PC-9 (cell line): ENCODE measurements at regions of chr2 and their contacts with region 1.

Region 1: DNA sequence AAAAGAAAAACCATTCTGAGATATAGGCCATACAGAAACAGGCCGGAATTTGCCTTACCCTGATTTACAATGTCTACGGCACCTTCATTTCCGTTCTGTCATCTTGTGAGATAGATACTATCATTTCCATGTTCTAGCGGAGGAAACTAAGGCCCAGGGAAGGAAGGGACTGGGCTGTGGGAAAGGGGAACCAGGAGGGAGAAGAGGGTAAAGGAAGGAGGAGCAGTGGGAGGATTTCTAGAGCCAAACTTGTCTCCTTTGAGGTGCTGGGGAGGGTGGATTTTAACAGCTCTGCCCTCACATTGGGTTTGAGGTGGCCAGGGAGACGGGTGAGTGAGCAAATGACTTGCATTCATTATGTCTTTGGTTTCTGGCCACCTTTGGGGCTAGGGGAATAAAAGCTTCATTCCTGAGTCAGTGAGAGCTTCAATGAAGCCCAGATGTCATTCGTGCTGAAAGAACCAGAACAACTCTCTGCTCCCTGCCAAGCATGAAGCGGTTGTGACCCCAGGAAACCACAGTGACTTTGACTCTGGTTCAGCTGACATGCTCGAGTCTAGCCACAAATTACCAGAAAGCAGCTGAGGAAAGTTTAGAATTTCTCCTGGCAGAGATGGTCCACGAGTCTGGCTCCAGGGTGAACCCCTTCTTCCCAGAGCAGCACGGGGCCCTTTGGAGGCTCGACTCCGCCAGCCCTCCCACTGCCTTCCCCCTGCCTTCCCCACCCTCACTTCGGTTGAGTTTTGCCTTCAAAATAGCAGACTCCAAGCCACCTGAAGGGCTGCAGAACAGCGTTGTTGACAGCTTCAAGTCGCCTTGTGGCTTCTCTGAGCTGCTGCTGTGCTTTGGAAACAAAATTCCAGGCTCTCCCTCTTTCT is 3.8 kb downstream of the ACTG2 start:
- DNase-seq: no peak
- H3K4me3 ChIP-seq: no peak overlapping the region
- H3K27ac ChIP-seq: no peak overlapping the region
- H3K4me1 ChIP-seq: no peaks in the 10 kb centered on the region
- H3K27me3 ChIP-seq: no peaks in the 10 kb centered on the region
- CTCF ChIP-seq: no peak

Region 2: DNA sequence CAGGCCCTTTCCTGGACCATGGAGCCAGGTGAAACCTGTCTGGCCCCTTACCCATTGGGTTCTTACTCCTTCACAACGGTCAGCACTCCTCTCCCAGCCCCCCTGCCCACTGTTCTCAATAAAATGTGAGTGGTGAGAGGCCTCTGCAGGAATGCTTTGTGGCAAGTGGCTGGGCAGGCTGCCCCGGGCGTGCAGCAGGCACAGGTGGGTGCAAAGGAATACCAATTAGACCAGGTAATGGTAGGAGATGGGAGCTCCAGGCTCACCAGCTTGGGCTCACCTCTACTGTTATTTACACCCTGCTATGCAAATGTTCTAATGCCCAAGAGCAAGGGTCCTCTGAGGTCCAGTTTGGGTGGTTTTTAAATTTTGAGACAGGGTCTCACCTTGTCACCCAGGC is 669.5 kb before region 1 on chr2:
- CTCF ChIA-PET with region 1: no interaction called
- POLR2A ChIA-PET with region 1: interaction called, 12 read pairs
- intact Hi-C with region 1: no loop called
- DNase-seq: no peak
- H3K4me3 ChIP-seq: no peak overlapping the region
- H3K27ac ChIP-seq: no peak overlapping the region
- H3K4me1 ChIP-seq: no peaks in the 10 kb centered on the region
- H3K27me3 ChIP-seq: no peaks in the 10 kb centered on the region
- CTCF ChIP-seq: no peak

Region 3: DNA sequence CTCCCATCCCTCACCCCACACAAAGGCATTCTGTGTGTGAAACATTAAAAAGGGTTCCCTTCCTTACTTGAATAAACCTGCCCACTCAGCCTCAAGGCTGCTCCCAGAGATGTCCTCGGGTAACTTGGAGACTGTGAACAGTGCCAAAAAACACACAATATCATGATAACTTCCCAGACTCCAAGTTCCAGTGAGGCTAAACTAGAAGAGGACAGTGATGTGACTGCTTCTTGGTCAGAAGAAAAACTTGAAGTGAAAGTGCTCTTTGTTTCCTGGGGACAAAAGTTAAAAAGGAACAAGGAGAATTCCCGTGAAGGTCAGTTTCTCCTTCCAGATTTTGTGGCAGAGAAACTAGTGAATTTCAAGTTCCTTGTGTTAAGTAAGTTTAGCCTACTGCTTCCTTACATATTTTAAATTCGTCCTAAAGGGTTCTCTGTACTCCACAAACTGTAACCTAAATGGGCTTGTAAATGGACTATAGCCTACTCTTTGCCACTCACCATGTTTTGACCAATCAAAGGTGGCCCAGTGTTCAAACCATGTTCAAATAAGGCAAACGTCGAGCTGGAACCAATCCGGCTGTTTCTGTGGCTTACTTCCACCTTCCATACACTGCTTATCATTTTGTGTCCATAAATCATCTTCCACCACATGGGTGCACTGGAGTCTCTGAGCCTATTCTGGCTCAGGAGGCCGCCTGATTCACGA is 179.9 kb before region 1 on chr2:
- CTCF ChIA-PET with region 1: no interaction called
- POLR2A ChIA-PET with region 1: no interaction called
- intact Hi-C with region 1: no loop called
- DNase-seq: no peak
- H3K4me3 ChIP-seq: no peak overlapping the region
- H3K27ac ChIP-seq: no peak overlapping the region
- H3K4me1 ChIP-seq: no peaks in the 10 kb centered on the region
- H3K27me3 ChIP-seq: peaks cover 65% of the 10 kb centered on the region
- CTCF ChIP-seq: no peak

Region 4: DNA sequence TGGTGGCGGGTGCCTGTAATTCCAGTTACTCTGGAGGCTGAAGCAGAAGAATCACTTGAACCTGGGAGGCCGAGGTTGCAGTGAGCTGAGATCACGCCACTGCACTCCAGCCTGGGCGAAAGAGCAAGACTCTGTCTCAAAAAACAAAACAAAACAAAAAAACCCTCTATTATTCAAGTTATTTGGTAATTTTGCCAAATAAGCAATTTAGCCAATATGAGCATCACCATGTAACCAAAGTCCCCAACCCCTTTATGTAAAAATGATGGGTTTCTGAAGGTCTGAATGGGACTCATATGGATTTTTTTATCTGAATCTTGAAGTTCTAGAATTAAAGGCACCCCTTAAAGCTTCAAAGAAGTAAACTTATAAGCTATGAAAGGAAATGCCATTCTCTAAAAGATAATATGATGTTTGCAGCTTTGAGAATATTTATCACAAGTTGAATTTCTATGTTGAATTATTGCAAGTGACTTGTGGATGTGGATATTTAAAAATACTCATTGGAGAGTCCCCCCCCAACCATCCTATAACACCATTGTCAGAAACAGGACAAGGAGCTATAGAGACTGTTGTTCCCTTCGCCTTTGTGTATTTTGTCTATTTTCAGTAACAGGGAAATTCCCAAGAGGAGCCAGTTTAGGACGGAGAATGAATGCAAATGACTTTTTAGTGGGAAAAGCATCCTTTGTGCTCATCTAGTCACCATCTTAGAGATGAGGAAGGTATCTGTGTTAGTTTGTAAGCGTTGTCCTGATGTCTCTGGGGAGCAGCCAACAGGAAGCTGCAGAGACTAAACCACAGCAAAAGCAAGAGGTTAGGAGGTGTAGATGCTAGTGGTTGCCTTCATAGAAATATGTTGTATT is 156.4 kb after region 1 on chr2:
- CTCF ChIA-PET with region 1: no interaction called
- POLR2A ChIA-PET with region 1: no interaction called
- intact Hi-C with region 1: no loop called
- DNase-seq: no peak
- H3K4me3 ChIP-seq: no peak overlapping the region
- H3K27ac ChIP-seq: no peak overlapping the region
- H3K4me1 ChIP-seq: no peaks in the 10 kb centered on the region; the same call in 1 of the 2 replicates
- H3K27me3 ChIP-seq: no peaks in the 10 kb centered on the region
- CTCF ChIP-seq: no peak